ENCODE measurements at regions of chr18 and their contacts with region 1.

Region 1: GRCh38 chr18:32158108-32158624 is 31.7 kb upstream of the MEP1B start:
- DNase-seq: peak; percentile 69 to 80 (median 73)
- ATAC-seq: peak; percentile 80 to 99 (median 97)
- H3K4me3 ChIP-seq: peak overlapping the region in 7 of 12 donors; percentile 6 to 39 (median 22)
- H3K27ac ChIP-seq: no peak overlapping the region
- H3K4me1 ChIP-seq: peaks cover 0 to 8% (median 3%) of the 10 kb centered on the region in 12 donors
- H3K27me3 ChIP-seq: peaks cover 0 to 5% (median 0%) of the 10 kb centered on the region in 9 donors
- CTCF ChIP-seq: peak; percentile 74 to 88 (median 82)
- POLR2A ChIP-seq: no peak

Region 2: GRCh38 chr18:32289483-32290075 is 131.4 kb after region 1 on chr18:
- intact Hi-C with region 1: no loop called
- DNase-seq: peak in 2 of 5 donors; percentile 33 to 38
- ATAC-seq: peak; percentile 61 to 82 (median 70)
- H3K4me3 ChIP-seq: no peak overlapping the region
- H3K27ac ChIP-seq: no peak overlapping the region
- H3K4me1 ChIP-seq: peaks cover 0 to 3% (median 0%) of the 10 kb centered on the region in 12 donors
- H3K27me3 ChIP-seq: no peaks in the 10 kb centered on the region
- CTCF ChIP-seq: peak; percentile 56 to 73 (median 64)
- POLR2A ChIP-seq: no peak

Region 3: DNA sequence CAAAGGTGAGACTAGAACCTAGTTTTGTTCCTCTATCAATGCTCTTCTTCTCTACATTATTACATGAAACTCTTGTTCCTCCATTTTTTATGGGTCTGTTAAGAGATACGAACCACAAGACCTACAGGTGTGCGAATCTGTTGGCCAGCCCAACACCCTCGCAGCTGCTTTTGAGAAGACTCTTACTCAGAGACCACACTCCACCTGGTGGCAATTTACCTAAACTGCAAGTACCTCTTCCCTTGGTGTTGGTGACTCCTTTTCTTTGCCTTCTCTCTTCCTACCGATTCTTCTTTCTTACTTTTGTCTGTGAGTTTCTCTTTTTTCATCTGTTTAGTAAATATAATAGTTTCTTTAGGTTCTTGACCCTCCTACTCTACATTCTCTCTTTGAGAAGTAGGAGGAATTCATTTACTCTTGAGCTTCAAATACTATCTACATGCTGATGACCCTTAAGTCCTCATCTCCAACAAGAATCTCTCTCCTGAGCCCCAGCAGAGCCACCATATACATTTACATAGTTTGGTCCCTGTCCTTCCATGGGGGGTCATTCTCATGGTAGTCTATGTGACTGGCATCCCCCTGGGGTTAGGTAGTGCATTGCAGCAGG is 394.4 kb after region 1 on chr18:
- intact Hi-C with region 1: loop called (anchors 1 to 5 kb)
- DNase-seq: peak in 4 of 5 donors; percentile 36 to 45 (median 40)
- ATAC-seq: peak in 2 of 4 donors; percentile 70
- H3K4me3 ChIP-seq: no peak overlapping the region
- H3K27ac ChIP-seq: no peak overlapping the region
- H3K4me1 ChIP-seq: no peaks in the 10 kb centered on the region
- H3K27me3 ChIP-seq: peaks cover 0 to 5% (median 0%) of the 10 kb centered on the region in 9 donors
- CTCF ChIP-seq: peak; percentile 63 to 80 (median 73)
- POLR2A ChIP-seq: no peak